Activated naive CD4-positive, alpha-beta T cell treated with anti-CD3 and anti-CD28 coated beads for 36 hours (primary cell): ENCODE measurements at regions of chr1 and their contacts with region 1.

Region 1: DNA sequence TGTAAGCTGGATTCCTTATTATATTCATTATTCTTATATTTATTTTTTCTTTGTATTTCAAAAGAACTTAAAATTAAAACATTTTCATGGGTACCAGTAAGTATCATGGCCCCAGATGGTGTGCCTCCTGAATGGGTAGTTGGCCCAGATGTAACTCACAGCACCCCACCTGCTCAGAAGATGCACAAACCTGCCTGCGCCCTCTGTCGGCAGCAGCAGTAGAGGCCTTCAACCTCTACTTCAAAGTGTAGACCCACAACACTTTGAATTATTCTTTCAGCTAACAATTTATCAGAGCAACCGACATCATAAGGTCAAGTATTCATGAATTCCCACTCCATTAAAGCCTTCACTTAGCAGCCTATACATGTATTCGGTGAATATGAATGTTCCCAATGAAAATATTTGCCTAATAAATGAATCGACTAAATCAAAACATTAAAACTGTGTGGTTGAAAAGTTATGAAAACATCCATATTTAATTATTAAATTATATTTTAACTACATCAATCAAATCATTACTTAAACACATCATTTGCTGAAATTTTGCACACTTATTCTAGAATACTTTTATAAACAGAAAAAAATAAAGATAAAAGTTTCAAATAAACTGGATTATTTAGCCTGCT is 25.4 kb downstream of the PIGM start:
- DNase-seq: peak; percentile 84
- H3K4me3 Mint-ChIP-seq: no peak overlapping the region
- H3K27ac Mint-ChIP-seq: no peak overlapping the region
- H3K4me1 Mint-ChIP-seq: no peaks in the 10 kb centered on the region
- H3K27me3 Mint-ChIP-seq: no peaks in the 10 kb centered on the region

Region 2: GRCh38 chr1:159214149-159214760 is 792.2 kb before region 1 on chr1:
- CTCF ChIA-PET with region 1: no interaction called
- intact Hi-C with region 1: loop called (anchors 5 kb)
- DNase-seq: peak; percentile 59
- H3K4me3 Mint-ChIP-seq: no peak overlapping the region
- H3K27ac Mint-ChIP-seq: no peak overlapping the region
- H3K4me1 Mint-ChIP-seq: peaks cover 2% of the 10 kb centered on the region
- H3K27me3 Mint-ChIP-seq: peaks cover 48% of the 10 kb centered on the region

Region 3: GRCh38 chr1:159891275-159892157 is 114.9 kb before region 1 on chr1:
- CTCF ChIA-PET with region 1: interaction called, 51 read pairs
- intact Hi-C with region 1: loop called (anchors 1 kb)
- DNase-seq: peak; percentile 87
- H3K4me3 Mint-ChIP-seq: no peak overlapping the region
- H3K27ac Mint-ChIP-seq: no peak overlapping the region
- H3K4me1 Mint-ChIP-seq: peaks cover 6% of the 10 kb centered on the region
- H3K27me3 Mint-ChIP-seq: no peaks in the 10 kb centered on the region

Region 4: GRCh38 chr1:159945483-159946241 is 60.8 kb before region 1 on chr1 and contains the start of gene IGSF9:
- CTCF ChIA-PET with region 1: interaction called, 228 read pairs
- intact Hi-C with region 1: loop called (anchors 2 kb)
- DNase-seq: peak; percentile 63
- H3K4me3 Mint-ChIP-seq: peak within 1 kb of the TSS; percentile 45
- H3K27ac Mint-ChIP-seq: no peak within 1 kb of the TSS
- H3K4me1 Mint-ChIP-seq: peaks cover 6% of the 10 kb centered on the region
- H3K27me3 Mint-ChIP-seq: peaks cover 18% of the 10 kb centered on the region
- total RNA-seq, gene IGSF9: not detected

Region 5: DNA sequence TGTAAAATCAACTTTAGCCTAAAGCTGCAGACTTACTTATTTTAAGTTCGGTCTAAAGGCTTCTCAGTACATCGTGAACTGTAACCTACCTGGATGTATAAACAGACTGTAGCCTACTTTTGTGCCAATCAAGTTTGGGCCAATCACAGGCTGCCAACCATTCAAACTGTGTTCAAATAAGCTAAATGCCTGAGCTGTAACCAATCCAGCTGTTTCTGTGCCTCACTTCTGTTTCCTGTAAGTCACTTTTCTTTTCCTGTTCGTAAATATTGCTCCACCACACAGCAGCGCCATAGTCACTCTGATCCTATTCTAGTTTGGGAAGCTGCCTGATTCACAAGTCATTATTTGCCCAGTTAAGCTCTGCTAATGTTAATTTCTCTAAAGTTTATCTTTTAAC is 14.9 kb before region 1 on chr1:
- CTCF ChIA-PET with region 1: interaction called, 12 read pairs
- intact Hi-C with region 1: no loop called
- DNase-seq: peak; percentile 57
- H3K4me3 Mint-ChIP-seq: peak overlapping the region; percentile 19
- H3K27ac Mint-ChIP-seq: no peak overlapping the region
- H3K4me1 Mint-ChIP-seq: peaks cover 8% of the 10 kb centered on the region
- H3K27me3 Mint-ChIP-seq: no peaks in the 10 kb centered on the region

Region 6: GRCh38 chr1:160078512-160079195 is 72.2 kb after region 1 on chr1:
- CTCF ChIA-PET with region 1: interaction called, 16 read pairs
- intact Hi-C with region 1: no loop called
- DNase-seq: peak; percentile 77
- H3K4me3 Mint-ChIP-seq: no peak overlapping the region
- H3K27ac Mint-ChIP-seq: no peak overlapping the region
- H3K4me1 Mint-ChIP-seq: no peaks in the 10 kb centered on the region
- H3K27me3 Mint-ChIP-seq: peaks cover 40% of the 10 kb centered on the region